AG04450 (cell line): ENCODE measurements at regions of chr13 and their contacts with region 1.

Region 1: DNA sequence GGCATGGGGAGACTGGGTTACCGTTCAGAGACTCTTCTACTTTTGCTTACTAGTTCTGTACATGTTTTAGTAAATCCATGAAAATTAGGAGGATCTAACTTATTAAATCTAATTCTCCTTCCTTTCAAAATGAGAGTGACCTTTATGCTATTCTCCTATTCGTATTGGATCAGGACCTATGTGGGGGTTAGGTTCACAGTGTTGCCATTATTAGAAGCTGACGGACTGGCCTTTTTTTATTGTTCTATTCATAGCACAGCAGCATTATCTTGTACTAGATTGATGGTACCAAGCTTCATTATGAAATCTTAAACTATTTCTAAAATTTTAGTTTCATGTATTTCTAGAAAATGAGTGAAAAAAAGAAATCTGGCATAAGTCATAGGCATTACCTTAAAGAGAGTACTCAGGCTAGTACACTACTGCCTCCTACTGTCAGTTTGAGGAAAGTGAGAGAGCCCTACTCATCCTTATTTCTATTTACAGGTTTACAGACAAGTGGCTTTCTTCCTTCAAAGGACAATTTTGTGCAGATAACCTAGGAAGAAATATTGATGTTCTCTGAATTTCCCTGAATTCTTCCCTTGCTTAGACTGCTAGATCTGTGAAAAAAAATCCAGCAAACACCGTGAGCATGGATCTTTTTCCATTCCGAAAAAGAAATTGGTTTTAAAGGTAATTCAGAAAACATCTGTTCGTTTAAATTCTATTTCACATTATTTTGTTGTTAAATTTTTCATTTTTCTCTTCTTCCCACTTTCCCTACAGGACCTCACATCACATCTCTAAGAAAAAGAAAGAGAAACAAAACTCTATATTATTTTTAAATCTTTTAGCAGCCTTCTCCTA is 485.5 kb downstream of the DIAPH3 start:
- DNase-seq: peak; percentile 43
- H3K4me3 ChIP-seq: no peak overlapping the region
- H3K27ac ChIP-seq: no peak overlapping the region
- H3K27me3 ChIP-seq: no peaks in the 10 kb centered on the region
- CTCF ChIP-seq: peak; percentile 93

Region 2: DNA sequence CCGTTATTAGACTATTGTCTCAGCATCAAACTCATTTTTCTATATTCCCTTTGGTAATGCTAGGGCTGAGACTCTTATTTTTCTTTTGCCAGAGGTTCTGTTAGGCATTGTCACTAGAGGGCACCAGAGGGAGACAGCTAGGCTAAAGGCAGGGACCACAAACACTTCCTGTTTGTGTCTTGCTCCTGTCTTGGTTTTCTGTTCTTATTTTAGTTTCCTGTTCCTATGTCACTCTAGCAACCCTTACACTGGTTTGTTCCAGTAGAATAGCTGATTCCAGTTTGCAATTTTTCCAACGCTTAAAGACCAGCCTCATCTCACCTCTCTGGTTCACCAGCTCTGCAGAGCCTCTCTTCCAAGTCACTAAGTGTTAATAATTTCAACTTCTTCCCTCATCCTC is 286.5 kb before region 1 on chr13:
- CTCF ChIA-PET with region 1: interaction called, 339 read pairs
- POLR2A ChIA-PET with region 1: no interaction called
- DNase-seq: peak; percentile 51
- H3K4me3 ChIP-seq: no peak overlapping the region
- H3K27ac ChIP-seq: no peak overlapping the region
- H3K27me3 ChIP-seq: no peaks in the 10 kb centered on the region
- CTCF ChIP-seq: peak; percentile 98

Region 3: DNA sequence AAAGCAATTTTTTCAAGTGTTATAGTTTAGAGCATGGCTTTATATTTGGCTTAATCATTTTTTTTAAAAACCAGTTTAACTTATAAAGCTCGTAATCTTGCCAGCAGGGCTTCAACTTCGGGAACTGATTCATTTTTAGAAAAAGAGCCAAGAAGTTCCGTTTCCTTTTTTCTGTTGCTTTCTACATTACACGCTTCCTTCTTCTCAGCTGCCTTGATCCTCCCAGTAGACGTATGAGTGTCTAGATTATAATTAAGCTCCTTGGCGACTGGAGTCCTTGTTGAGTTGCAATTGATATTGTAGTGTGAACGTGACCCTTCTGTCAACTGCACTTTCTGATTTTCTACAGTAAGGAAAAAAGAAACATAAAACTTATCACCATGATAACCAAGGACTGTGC is 11.7 kb before region 1 on chr13:
- CTCF ChIA-PET with region 1: interaction called, 19 read pairs
- POLR2A ChIA-PET with region 1: no interaction called
- DNase-seq: no peak
- H3K4me3 ChIP-seq: no peak overlapping the region
- H3K27ac ChIP-seq: no peak overlapping the region
- H3K27me3 ChIP-seq: no peaks in the 10 kb centered on the region
- CTCF ChIP-seq: no peak

Region 4: DNA sequence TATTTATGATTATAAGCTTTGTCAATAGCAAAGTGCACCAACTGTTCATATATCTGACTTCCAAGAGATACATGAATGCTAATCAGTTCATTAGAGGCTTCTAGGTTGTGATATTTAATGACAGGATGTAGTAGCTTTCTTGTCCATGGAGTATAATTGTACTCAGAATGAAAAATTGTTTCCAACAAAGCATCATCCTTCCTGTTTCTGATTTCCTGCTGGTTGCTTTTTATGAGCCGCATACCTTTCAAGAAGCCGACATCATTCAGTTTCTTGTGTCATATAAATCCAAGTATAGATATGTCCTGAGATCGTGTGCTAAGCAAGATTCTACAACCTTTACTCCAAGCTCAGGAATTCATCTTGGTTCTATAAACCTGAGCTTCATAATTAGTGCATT is 158.9 kb after region 1 on chr13:
- CTCF ChIA-PET with region 1: no interaction called
- POLR2A ChIA-PET with region 1: no interaction called
- DNase-seq: no peak
- H3K4me3 ChIP-seq: no peak overlapping the region
- H3K27ac ChIP-seq: no peak overlapping the region
- H3K27me3 ChIP-seq: no peaks in the 10 kb centered on the region
- CTCF ChIP-seq: no peak

Region 5: GRCh38 chr13:59906413-59907049 is 228.3 kb after region 1 on chr13:
- CTCF ChIA-PET with region 1: interaction called, 120 read pairs
- POLR2A ChIA-PET with region 1: no interaction called
- DNase-seq: peak; percentile 8
- H3K4me3 ChIP-seq: no peak overlapping the region
- H3K27ac ChIP-seq: no peak overlapping the region
- H3K27me3 ChIP-seq: no peaks in the 10 kb centered on the region
- CTCF ChIP-seq: peak; percentile 75

Region 6: DNA sequence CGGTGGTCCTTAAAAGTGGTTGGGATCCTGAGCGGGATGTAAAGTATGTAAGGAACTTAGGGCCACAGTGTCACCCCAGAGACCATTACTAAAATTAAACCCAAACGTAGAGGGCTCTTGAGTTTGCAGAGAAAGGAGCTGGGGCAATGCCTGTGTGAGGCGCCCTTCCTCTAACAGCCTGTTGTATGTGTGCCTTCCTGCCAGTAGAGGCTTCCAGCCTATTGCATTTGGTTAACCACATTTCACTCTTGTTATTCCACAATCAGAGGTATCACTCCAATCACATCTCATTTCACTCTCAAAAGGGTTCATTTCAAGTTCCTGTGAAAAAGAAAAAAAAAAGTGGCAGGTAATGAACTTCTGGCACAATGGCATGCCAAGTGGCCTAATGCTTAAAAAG is 456.2 kb after region 1 on chr13:
- CTCF ChIA-PET with region 1: no interaction called
- POLR2A ChIA-PET with region 1: no interaction called
- DNase-seq: no peak
- H3K4me3 ChIP-seq: no peak overlapping the region
- H3K27ac ChIP-seq: no peak overlapping the region
- H3K27me3 ChIP-seq: no peaks in the 10 kb centered on the region
- CTCF ChIP-seq: peak; percentile 54

Region 7: GRCh38 chr13:60329221-60329983 is 651.2 kb after region 1 on chr13:
- CTCF ChIA-PET with region 1: interaction called, 11 read pairs
- POLR2A ChIA-PET with region 1: no interaction called
- DNase-seq: no peak
- H3K4me3 ChIP-seq: no peak overlapping the region
- H3K27ac ChIP-seq: no peak overlapping the region
- H3K27me3 ChIP-seq: no peaks in the 10 kb centered on the region
- CTCF ChIP-seq: peak; percentile 41

Region 8: DNA sequence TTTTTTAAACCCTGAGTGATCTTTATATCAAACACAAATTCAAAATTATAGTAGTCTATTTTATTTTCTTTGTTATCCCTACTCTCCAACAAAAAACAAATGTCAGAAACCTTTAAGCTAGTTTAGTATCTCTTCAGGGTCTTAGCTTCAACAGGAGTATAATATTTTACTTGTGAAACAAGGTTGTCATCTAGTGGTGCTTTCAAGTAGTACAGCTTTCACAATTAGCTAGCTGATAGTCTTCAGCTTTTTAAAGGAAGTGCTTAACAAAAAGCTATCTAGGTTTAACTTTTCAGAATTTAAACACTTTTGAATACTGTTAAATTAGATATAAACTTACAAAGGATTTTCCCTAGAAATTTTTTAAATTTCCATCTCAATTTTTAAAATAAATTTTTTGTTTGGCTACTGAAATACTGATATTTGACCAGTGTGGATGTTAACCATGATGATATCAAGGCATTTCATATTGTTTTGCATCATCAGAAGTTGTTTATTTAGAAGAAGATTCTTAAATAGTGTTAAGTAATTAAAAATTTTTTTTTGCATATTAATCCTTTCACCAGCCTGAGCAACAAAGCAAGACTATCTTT is 753.0 kb after region 1 on chr13:
- CTCF ChIA-PET with region 1: interaction called, 21 read pairs
- POLR2A ChIA-PET with region 1: no interaction called
- DNase-seq: peak; percentile 21
- H3K4me3 ChIP-seq: no peak overlapping the region
- H3K27ac ChIP-seq: no peak overlapping the region
- H3K27me3 ChIP-seq: no peaks in the 10 kb centered on the region
- CTCF ChIP-seq: peak; percentile 96